ENCODE measurements at regions of chr1 and their contacts with region 1.

Region 1: DNA sequence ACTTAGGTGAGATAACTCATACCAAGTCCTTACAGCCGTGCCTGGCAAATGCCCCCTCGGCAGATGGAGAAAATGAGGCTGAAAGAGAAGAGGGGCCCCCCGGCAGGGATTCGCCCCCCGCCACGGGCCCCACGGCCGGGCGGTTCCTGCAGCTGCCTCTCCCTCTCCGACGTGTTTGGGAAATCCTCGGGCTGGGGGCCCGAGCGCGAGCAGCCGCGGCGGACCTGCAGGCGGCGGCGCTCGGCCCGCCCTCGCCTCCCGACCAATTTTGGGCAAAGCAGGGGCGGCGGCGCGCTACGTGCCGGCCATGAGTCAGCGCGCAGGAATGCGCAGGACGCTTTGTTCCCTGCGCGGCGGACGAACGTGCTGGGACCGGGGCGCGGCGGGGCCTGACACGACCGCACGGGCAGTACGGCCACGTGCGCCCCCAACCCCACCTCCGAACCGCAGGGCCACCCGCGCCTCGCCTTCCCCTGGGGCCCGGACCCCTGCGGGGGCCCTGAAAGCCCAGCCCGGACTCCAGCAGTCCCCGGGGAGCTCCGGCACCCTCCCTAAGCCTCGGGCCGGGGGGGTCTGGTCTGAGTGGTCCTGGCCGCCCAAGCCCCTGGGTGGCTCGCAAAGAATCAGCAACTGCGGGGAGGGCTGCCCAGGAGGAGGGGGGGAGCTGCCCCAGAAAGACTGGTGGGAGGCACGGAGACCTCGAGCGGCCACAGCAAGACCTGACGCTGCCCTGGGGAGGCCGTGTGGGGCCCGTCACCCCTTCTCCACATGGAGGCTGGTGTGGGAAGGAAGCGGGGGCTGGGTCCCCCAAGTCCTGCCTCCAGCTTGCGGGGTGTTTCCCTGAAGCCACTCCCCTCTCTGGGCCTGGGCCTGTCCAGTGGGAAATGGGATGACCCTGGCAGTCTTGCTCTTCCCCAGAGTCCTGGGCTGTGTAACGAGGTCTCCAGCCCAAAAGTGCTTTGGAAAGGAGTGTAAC is 11.9 kb upstream of the EDN2 start:
- DNase-seq: no peak
- ATAC-seq: peak; percentile 61
- H3K4me3 ChIP-seq: peak overlapping the region; percentile 41
- H3K27ac ChIP-seq: no peak overlapping the region
- H3K4me1 ChIP-seq: no peaks in the 10 kb centered on the region; the same call in 1 of the 2 replicates
- H3K27me3 ChIP-seq: peaks cover 0 to 1% of the 10 kb centered on the region in 2 experiments; a peak in 2 of 4 replicates
- CTCF ChIP-seq: no peak
- EP300 ChIP-seq: no peak
- POLR2A ChIP-seq: no peak
- RAD21 ChIP-seq: no peak

Region 2: DNA sequence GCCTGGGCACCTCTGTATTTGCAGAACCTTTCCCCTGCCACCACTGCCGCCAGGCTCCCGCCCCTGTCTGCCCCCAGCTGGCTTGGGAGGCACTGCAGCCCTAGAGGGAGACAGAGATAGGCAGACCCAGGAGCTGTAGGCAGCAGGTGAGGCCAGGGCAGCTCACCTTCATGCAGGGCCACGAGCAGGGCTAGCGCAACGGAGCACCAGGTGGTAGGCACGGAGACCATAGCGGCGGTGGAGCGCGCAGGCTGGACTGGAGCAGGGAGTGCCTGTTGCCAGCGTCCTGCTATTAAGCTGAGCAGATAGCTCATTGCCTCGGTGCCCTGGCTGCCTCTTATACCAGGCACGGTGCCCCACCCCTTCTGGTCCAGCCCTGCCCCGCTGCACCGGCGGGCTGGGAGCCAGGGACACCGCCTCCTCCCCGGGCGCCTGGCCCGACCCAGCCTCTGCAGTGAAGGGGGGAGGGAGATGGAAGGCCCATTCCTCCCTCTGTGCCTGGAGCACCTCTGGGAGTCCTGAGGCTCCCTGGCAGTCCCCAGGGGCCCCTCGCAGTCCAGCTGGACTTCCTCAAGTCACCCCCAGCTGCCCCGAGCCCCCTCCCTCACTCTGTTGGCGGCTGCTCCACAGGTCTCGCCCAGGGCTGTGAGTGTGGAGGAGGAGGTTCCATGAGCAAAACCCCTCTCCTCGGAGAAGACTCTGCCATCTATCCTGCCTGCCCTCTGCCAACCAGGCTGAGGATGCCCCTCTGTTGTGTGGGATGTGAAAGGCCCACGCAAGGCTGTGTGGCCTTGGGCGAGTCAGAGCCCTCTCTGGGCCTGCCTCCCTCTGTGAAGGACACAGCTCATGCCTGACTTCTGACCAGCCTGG is 11.8 kb before region 1 on chr1 and contains the start of gene EDN2:
- CTCF ChIA-PET with region 1: interaction called, 37 read pairs
- POLR2A ChIA-PET with region 1: interaction called, 4 read pairs
- RAD21 ChIA-PET with region 1: interaction called, 4 read pairs
- SMC1A ChIA-PET with region 1: interaction called, 3 read pairs
- in situ Hi-C with region 1: no loop called
- intact Hi-C with region 1: no loop called
- DNase-seq: no peak
- ATAC-seq: peak; percentile 46
- H3K4me3 ChIP-seq: no peak within 1 kb of the TSS
- H3K27ac ChIP-seq: no peak within 1 kb of the TSS
- H3K4me1 ChIP-seq: peaks cover 40% of the 10 kb centered on the region
- H3K27me3 ChIP-seq: no peaks in the 10 kb centered on the region
- CTCF ChIP-seq: peak in 2 of 3 experiments; percentile 22 to 39; a peak in 4 of 6 replicates
- EP300 ChIP-seq: no peak
- POLR2A ChIP-seq: no peak
- RAD21 ChIP-seq: no peak
- polyA plus RNA-seq, gene EDN2: 0.11 TPM in 1 of 2 experiments, not detected in the other

Measured in GM12878 (cell line).